Head of caudate nucleus (tissue), 42 donors: ENCODE measurements at regions of chr18 and their contacts with region 1.

Region 1: DNA sequence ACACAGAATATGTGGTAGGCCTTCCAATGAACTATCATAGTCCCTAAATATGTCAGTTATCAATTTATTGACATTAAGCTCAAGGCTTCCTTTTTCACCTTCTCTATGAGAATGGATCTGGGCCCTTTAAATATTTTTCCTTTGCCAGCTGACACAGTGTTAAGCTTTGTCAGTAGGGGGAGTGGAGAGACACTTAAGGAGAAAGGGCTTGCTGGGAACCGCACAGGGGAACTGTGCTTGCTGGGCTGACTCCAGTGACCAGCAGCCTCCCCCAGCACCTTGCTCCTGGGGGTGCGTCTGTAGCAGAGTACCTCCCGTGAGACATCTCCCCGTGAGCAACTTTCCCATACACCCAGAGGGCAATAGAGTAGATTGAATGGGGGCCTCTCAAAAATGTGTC is 6.5 kb upstream of the PTPN2 start:
- DNase-seq: no peak

Region 2: DNA sequence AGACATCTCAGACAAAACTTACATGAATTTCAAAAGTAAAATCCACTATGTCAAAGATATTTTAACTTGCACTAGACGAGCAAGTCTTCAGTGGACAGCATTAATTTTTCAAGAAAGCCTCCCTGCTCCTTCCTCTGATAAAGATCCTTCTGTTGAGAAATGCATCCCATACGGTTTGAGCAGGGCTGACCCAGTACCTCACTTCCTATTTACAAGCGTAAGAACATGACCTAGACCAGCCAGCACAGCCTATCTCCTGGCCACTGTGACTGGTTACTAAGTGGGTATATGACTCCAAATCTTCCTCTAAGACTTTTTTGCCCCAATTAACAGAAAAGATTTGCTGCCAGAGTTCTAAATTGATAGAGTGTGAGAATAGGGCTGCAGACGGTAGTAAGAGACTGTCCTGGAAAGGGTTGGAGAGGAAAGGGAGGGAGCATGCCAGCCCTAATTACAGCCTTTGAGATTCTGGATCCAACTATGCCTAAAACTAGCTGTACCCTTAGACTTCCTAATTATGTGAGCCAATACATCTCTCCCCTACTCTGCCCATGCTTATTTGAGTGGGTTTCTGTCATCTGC is 374.4 kb before region 1 on chr18:
- intact Hi-C with region 1: no loop called
- DNase-seq: peak in 1 of 42 donors; percentile 5

Region 3: DNA sequence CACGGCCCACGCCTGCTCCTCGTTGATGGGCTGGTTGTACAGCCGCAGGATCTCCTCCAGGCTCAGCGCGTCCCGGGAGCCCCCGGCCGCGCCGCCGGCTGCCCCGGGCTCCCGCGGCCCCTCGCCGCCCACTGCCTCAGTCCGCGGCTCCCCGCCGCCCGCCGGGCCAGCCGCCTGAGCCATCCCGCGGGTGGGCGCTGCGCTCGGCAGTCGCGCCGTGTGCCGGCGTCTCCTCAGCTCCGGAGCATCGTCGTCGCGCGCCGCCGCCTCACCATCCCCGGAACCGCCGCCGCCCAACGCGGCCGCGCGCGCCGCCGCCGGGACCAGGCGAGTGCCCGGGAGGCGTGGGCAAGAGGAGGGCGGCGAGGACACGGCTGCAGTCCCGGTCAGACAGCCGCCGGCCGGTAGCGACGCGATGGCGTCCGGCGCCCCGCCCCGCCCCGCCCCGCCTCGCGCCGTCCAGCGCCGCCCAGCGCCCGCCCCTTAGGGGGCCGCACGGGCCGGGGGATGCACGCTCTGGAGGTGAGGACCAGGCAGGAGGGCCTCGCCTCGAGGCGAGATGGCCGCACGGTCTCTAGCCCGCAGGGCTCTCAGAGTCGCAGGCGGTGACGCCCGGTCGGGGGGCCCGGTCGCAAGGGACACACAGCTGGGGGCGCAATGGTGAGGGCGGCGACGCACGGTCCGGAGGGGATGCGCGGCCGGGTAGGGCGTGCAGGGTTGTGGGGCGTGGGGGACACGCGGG is 232.7 kb before region 1 on chr18 and contains the start of gene SPIRE1:
- intact Hi-C with region 1: no loop called
- DNase-seq: peak in 40 of 42 donors; percentile 51 to 88 (median 76)

Region 4: GRCh38 chr18:12726774-12727550 is 163.5 kb before region 1 on chr18:
- intact Hi-C with region 1: loop called (anchors 5 kb)
- DNase-seq: peak in 39 of 42 donors; percentile 15 to 93 (median 72)

Region 5: DNA sequence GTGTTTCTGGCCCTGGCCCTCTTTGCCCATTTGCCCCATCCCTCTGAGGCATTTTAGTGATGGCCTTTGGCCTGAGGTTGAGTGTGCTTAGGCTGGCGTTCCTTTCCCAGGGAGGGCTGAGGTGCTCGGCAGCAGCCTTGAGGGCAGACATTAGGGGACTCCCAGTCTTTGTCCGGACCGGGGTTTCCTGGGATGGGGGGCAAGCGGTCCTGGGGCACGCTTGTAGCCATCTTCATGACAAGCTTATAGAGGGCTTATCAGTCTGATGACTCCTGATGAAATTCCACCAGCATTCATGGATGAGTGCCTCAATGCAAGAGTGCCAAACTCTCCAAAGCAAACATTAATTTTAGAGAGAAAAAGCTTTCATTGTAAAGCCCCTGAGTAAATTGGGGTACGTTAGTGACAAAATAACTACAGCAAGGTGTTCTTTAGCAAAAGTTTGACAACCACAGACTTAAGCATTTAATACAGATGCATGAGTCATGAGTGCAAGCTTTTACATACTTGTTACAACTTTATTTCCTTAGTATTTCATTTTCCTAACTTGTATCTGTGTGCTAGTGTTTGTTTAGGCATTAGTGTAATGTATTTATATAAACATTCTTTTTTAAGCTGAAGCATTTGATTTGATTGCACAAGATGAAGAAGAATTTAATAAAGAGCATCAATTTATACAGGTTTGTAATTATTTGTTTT is 146.3 kb after region 1 on chr18:
- intact Hi-C with region 1: no loop called
- DNase-seq: no peak